HCT116 (cell line): ENCODE measurements at regions of chr2 and their contacts with region 1.

Region 1: GRCh38 chr2:84925724-84926376 is 20.4 kb downstream of the TMSB10 start:
- DNase-seq: peak; percentile 98
- ATAC-seq: peak; percentile 86
- H3K4me3 ChIP-seq: peak overlapping the region; percentile 54 to 74
- H3K27ac ChIP-seq: peak overlapping the region; percentile 73
- H3K4me1 ChIP-seq: peaks cover 11 to 43% of the 10 kb centered on the region in 2 experiments
- H3K27me3 ChIP-seq: no peaks in the 10 kb centered on the region
- CTCF ChIP-seq: peak in 2 of 3 experiments; percentile 98 to 100; a peak in 4 of 6 replicates
- POLR2A ChIP-seq: peak; percentile 23
- RAD21 ChIP-seq: no peak

Region 2: GRCh38 chr2:84362541-84362940 is 563.3 kb before region 1 on chr2:
- CTCF ChIA-PET with region 1: no interaction called
- POLR2A ChIA-PET with region 1: no interaction called
- RAD21 ChIA-PET with region 1: no interaction called
- intact Hi-C with region 1: no loop called
- DNase-seq: no peak
- ATAC-seq: no peak
- H3K4me3 ChIP-seq: no peak overlapping the region
- H3K27ac ChIP-seq: no peak overlapping the region
- H3K4me1 ChIP-seq: no peaks in the 10 kb centered on the region
- H3K27me3 ChIP-seq: 0 out of 2 replicates have a peak, but pooled peaks cover 3% of the 10 kb centered on the region
- CTCF ChIP-seq: no peak
- POLR2A ChIP-seq: no peak
- RAD21 ChIP-seq: no peak

Region 3: GRCh38 chr2:84495539-84496146 is 430.2 kb before region 1 on chr2:
- CTCF ChIA-PET with region 1: interaction called, 8 read pairs
- POLR2A ChIA-PET with region 1: no interaction called
- RAD21 ChIA-PET with region 1: no interaction called
- intact Hi-C with region 1: loop called (anchors 1 kb)
- DNase-seq: peak; percentile 70
- ATAC-seq: peak; percentile 88
- H3K4me3 ChIP-seq: no peak overlapping the region
- H3K27ac ChIP-seq: no peak overlapping the region
- H3K4me1 ChIP-seq: no peaks in the 10 kb centered on the region; a peak in 1 of 4 replicates
- H3K27me3 ChIP-seq: no peaks in the 10 kb centered on the region
- CTCF ChIP-seq: peak; percentile 61 to 84 (median 61)
- POLR2A ChIP-seq: no peak
- RAD21 ChIP-seq: peak; percentile 90

Region 4: GRCh38 chr2:84881581-84882414 is 44.1 kb before region 1 on chr2:
- CTCF ChIA-PET with region 1: interaction called, 18 read pairs
- POLR2A ChIA-PET with region 1: interaction called, 3 read pairs
- RAD21 ChIA-PET with region 1: no interaction called
- intact Hi-C with region 1: loop called (anchors 1 kb)
- DNase-seq: peak; percentile 71
- ATAC-seq: peak; percentile 86
- H3K4me3 ChIP-seq: peak overlapping the region; percentile 51 to 63
- H3K27ac ChIP-seq: no peak overlapping the region
- H3K4me1 ChIP-seq: peaks cover 5 to 24% of the 10 kb centered on the region in 2 experiments; a peak in 3 of 4 replicates
- H3K27me3 ChIP-seq: no peaks in the 10 kb centered on the region; the same call in 1 of the 2 replicates
- CTCF ChIP-seq: peak; percentile 76 to 79 (median 78); a peak in 5 of 6 replicates
- POLR2A ChIP-seq: no peak
- RAD21 ChIP-seq: peak; percentile 75

Region 5: DNA sequence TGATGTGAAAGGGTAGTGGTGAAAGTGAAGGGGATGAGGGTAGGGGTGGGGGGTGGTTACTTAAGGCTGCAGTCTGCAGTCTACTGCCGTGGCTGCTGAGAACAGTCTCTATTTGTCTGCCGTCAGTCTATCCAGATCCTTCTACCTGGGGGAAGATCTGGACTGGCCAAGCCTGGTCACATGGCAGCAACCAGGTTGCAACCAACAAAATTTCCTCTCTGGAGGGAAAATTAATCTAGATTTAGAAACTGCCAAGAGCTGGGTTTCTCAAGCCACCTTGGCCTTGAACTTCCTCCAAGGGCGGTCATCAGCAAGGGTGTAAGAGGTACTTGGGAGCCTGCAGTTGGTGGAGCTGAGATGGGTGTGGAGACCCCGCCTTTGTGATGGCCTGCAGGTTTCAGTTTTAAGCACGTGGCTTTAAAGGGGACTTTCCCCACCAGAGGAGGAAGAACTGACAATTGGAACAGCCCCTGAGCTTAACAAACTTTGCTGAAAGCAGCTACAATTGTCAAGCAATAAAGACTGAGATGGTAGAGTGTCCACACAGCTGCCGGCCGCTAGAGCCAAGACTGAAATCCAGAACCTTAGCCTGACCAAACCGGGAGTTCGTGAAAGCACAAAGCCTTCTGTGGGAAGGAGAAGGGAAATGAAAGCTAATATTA is 13.7 kb after region 1 on chr2:
- CTCF ChIA-PET with region 1: interaction called, 39 read pairs
- POLR2A ChIA-PET with region 1: interaction called, 4 read pairs
- RAD21 ChIA-PET with region 1: no interaction called
- intact Hi-C with region 1: no loop called
- DNase-seq: no peak
- ATAC-seq: no peak
- H3K4me3 ChIP-seq: no peak overlapping the region
- H3K27ac ChIP-seq: no peak overlapping the region
- H3K4me1 ChIP-seq: peaks cover 15 to 88% of the 10 kb centered on the region in 2 experiments
- H3K27me3 ChIP-seq: no peaks in the 10 kb centered on the region
- CTCF ChIP-seq: no peak
- POLR2A ChIP-seq: no peak
- RAD21 ChIP-seq: no peak

Region 6: DNA sequence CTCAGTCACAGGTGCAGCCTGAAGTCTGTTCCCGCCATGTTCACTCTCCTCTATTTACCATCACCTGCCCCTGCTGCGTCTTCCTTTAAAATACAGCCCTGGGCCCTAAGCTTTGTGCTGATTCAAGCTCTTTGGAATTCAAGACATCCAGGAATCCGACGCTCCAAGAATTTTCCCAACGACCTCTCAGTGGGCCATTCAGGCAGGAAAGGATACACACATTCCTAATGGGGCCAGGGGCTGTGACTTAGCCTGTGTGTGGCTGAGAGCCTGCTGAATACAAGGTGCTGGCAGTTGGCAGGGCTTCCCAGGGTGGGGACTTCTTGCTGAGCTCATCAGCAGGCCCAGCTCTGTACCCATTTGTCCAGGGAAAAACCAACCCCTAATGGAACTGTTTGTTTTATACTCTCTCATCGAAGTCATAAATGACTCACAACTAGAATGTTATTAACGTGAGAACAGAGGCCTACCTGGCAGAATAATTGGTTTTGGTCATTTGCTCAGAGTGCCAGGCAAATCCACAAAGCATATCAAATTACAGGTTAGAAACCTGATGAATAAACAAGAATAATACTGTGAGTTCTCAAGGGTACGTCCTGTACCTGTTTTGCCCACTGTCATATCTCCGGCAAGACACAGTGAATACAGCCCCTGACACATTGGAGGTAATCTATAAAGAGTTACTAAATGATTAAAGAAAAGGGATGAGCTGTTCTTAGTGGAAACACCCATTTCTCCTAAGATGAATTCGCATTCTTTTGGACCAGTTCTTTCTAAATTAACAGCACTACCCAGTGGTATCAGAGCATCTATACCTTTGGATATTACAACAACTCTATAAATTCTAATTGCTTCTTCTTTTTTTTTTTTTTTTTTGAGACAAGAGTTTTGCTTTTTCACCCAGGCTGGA is 32.5 kb after region 1 on chr2:
- CTCF ChIA-PET with region 1: interaction called, 29 read pairs
- POLR2A ChIA-PET with region 1: interaction called, 11 read pairs
- RAD21 ChIA-PET with region 1: interaction called in 1 of 2 experiments, 6 read pairs
- intact Hi-C with region 1: no loop called
- DNase-seq: peak; percentile 93
- ATAC-seq: peak; percentile 87
- H3K4me3 ChIP-seq: peak overlapping the region; percentile 11 to 45; a peak in 3 of 4 replicates
- H3K27ac ChIP-seq: peak overlapping the region; percentile 83
- H3K4me1 ChIP-seq: peaks cover 42 to 61% of the 10 kb centered on the region in 2 experiments
- H3K27me3 ChIP-seq: no peaks in the 10 kb centered on the region
- CTCF ChIP-seq: no peak
- POLR2A ChIP-seq: no peak
- RAD21 ChIP-seq: peak; percentile 26; the same call in 1 of the 2 replicates

Region 7: GRCh38 chr2:85011747-85012146 is 85.9 kb after region 1 on chr2:
- CTCF ChIA-PET with region 1: interaction called, 14 read pairs
- POLR2A ChIA-PET with region 1: interaction called, 3 read pairs
- RAD21 ChIA-PET with region 1: interaction called in 1 of 2 experiments, 4 read pairs
- intact Hi-C with region 1: loop called (anchors 1 kb)
- DNase-seq: no peak
- ATAC-seq: peak; percentile 56; the same call in 1 of the 2 replicates
- H3K4me3 ChIP-seq: no peak overlapping the region
- H3K27ac ChIP-seq: no peak overlapping the region
- H3K4me1 ChIP-seq: peaks cover 6 to 26% of the 10 kb centered on the region in 2 experiments; a peak in 3 of 4 replicates
- H3K27me3 ChIP-seq: no peaks in the 10 kb centered on the region
- CTCF ChIP-seq: peak in 2 of 3 experiments; percentile 40 to 46; a peak in 3 of 6 replicates
- POLR2A ChIP-seq: no peak
- RAD21 ChIP-seq: no peak

Region 8: DNA sequence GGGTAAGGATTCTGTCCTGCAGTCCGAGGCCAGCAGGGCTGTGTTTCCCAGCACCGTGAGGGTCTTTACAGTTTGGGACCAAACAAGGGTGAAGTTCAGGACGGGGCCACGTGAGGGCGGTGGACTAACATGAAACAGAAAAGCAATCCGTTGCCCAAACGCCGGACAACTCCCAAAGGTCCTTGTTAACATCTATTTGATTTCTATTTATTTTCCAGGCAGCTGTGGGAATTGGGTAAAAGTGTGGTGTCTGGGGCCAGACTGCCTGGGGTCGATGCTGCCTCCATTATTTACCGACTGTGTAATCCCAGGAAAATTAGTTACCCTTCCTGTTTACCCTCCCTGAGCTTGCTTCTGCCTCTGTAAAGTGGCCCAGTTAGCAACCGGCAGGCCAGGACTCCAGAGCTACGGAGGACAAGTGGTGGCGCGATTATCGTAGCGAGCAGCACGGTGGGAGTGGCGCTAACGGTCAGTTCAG is 141.1 kb after region 1 on chr2:
- CTCF ChIA-PET with region 1: interaction called, 13 read pairs
- POLR2A ChIA-PET with region 1: no interaction called
- RAD21 ChIA-PET with region 1: interaction called in 1 of 2 experiments, 4 read pairs
- intact Hi-C with region 1: no loop called
- DNase-seq: peak; percentile 77
- ATAC-seq: peak; percentile 91
- H3K4me3 ChIP-seq: peak overlapping the region; percentile 31 to 40
- H3K27ac ChIP-seq: no peak overlapping the region
- H3K4me1 ChIP-seq: peaks cover 2 to 13% of the 10 kb centered on the region in 2 experiments; a peak in 3 of 4 replicates
- H3K27me3 ChIP-seq: no peaks in the 10 kb centered on the region
- CTCF ChIP-seq: peak; percentile 85 to 91 (median 90)
- POLR2A ChIP-seq: no peak
- RAD21 ChIP-seq: peak; percentile 91